Activated CD4-positive, alpha-beta T cell treated with anti-CD3 and anti-CD28 coated beads for 36 hours (primary cell): ENCODE measurements at regions of chr3 and their contacts with region 1.

Region 1: GRCh38 chr3:142578327-142579223 is at the start of gene ATR:
- DNase-seq: peak; percentile 98
- ATAC-seq: peak; percentile 96
- H3K4me3 Mint-ChIP-seq: peak within 1 kb of the TSS; percentile 97
- H3K27ac Mint-ChIP-seq: peak within 1 kb of the TSS; percentile 99
- H3K4me1 Mint-ChIP-seq: peaks cover 43% of the 10 kb centered on the region
- H3K27me3 Mint-ChIP-seq: no peaks in the 10 kb centered on the region
- total RNA-seq, gene ATR: 36.1 to 39.9 TPM

Region 2: DNA sequence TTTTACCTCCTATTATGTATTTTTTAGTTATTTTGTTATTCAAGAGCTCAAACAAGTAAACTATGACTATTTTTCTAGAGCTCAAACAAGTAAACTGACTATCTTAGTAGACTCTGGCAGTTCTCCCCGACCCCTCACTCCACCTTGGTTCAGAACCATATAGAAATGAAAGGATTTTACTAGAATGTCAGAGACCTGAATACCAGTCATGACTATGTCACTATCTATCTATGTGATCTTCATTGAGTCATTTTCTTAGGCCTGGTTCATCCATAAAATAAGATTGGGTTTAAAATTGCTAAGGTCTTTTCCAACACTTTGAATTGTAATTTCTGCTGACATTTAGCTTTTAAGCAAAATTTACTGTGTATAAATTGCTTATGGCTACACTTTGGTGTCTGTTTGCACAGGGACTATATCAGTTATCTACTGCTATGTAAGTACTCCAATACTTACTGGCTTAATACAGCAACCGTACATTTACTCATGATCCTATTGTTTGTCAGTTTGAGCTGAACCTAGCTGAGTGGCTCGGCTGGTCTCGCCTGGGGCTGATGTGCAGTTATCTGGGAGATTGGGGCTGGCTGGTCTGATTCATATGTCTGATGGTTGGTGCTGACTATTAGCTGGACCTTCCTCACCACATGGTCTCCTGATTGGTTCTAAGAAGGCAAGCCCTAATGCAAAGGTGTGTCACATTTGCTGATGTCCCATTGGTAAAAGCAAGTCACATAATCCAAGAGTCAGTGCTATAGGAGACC is 1054.8 kb before region 1 on chr3:
- CTCF ChIA-PET with region 1: no interaction called
- POLR2A ChIA-PET with region 1: no interaction called
- intact Hi-C with region 1: no loop called
- DNase-seq: no peak
- ATAC-seq: peak; percentile 54
- H3K4me3 Mint-ChIP-seq: no peak overlapping the region
- H3K27ac Mint-ChIP-seq: no peak overlapping the region
- H3K4me1 Mint-ChIP-seq: peaks cover 82% of the 10 kb centered on the region
- H3K27me3 Mint-ChIP-seq: no peaks in the 10 kb centered on the region

Region 3: GRCh38 chr3:142226484-142226883 is 352.1 kb before region 1 on chr3:
- CTCF ChIA-PET with region 1: no interaction called
- POLR2A ChIA-PET with region 1: no interaction called
- intact Hi-C with region 1: loop called in 1 of 2 experiments (anchors 1 kb)
- DNase-seq: no peak
- ATAC-seq: no peak
- H3K4me3 Mint-ChIP-seq: peak overlapping the region; percentile 82
- H3K27ac Mint-ChIP-seq: no peak overlapping the region
- H3K4me1 Mint-ChIP-seq: peaks cover 13% of the 10 kb centered on the region
- H3K27me3 Mint-ChIP-seq: no peaks in the 10 kb centered on the region

Region 4: GRCh38 chr3:142509079-142509478 is 69.5 kb before region 1 on chr3:
- CTCF ChIA-PET with region 1: no interaction called
- POLR2A ChIA-PET with region 1: no interaction called
- intact Hi-C with region 1: loop called in 1 of 2 experiments (anchors 2 kb)
- DNase-seq: no peak
- ATAC-seq: peak; percentile 25
- H3K4me3 Mint-ChIP-seq: peak overlapping the region; percentile 59
- H3K27ac Mint-ChIP-seq: peak overlapping the region; percentile 83
- H3K4me1 Mint-ChIP-seq: peaks cover 9% of the 10 kb centered on the region
- H3K27me3 Mint-ChIP-seq: no peaks in the 10 kb centered on the region

Region 5: GRCh38 chr3:142595951-142596725 is 17.6 kb after region 1 on chr3 and contains the start of gene PLS1:
- CTCF ChIA-PET with region 1: interaction called, 5 read pairs
- POLR2A ChIA-PET with region 1: interaction called, 7 read pairs
- intact Hi-C with region 1: loop called (anchors 1 kb)
- DNase-seq: peak; percentile 88
- ATAC-seq: peak; percentile 87
- H3K4me3 Mint-ChIP-seq: peak within 1 kb of the TSS; percentile 92
- H3K27ac Mint-ChIP-seq: peak within 1 kb of the TSS; percentile 90
- H3K4me1 Mint-ChIP-seq: peaks cover 16% of the 10 kb centered on the region
- H3K27me3 Mint-ChIP-seq: no peaks in the 10 kb centered on the region
- total RNA-seq, gene PLS1: 5.1 to 5.4 TPM

Region 6: DNA sequence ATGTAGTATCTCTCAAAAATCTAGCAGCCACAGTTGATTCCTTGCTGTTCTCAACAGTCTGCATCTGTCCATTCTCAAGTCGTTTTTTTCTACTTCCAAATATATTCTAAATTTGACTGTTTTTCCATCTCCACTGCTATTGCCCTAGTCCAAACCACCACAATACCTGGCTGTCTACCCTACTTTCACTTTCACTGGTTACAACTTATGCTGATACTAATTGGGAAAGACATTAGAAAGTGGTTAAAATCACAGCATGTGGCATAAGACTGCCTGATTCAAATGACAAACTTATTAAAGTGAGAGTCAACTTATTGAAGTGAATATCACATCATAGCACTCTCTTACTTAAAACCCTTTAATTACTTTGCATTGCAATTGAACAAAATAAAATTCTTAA is 613.6 kb after region 1 on chr3:
- CTCF ChIA-PET with region 1: no interaction called
- POLR2A ChIA-PET with region 1: no interaction called
- intact Hi-C with region 1: no loop called
- DNase-seq: no peak
- ATAC-seq: peak; percentile 53
- H3K4me3 Mint-ChIP-seq: no peak overlapping the region
- H3K27ac Mint-ChIP-seq: peak overlapping the region; percentile 7
- H3K4me1 Mint-ChIP-seq: peaks cover 28% of the 10 kb centered on the region
- H3K27me3 Mint-ChIP-seq: no peaks in the 10 kb centered on the region